ENCODE measurements at regions of chr14 and their contacts with region 1.

Region 1: DNA sequence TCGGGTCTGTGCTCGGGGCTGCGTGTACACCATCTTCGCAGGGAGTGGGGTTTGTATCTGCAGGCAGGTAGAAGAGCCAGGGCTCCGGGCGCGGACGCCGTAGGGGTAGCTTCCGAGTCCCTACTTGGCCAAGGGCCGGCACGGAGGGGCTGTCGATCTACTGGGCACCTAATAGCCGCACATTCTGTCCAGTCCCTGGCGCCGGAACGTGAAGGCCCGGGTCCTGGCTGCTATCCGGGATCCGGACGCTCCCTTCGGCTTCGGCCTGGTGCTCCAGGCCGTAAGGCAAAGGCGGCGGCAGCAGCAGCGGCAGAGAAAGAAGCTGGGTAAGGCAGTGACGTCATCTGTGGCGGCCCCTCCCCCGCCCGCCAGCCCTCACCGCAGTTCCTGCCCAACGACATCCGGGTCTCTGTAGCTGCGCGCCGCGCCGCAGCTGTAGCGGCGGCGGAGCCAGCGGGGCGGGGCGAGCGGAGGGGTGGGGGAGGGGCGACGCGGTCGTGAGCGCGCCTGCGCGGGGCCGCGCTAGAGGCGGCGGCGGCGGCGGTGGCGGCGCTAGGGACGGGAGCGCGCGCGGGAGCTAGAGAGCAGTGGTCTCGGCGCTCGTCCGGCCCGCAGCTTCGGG is at the start of gene PPM1A:
- DNase-seq: peak; percentile 96
- ATAC-seq: peak; percentile 76
- H3K4me3 Mint-ChIP-seq: peak within 1 kb of the TSS; percentile 90
- H3K27ac Mint-ChIP-seq: peak within 1 kb of the TSS; percentile 100
- H3K4me1 Mint-ChIP-seq: peaks cover 52% of the 10 kb centered on the region
- H3K27me3 Mint-ChIP-seq: no peaks in the 10 kb centered on the region
- CTCF ChIP-seq: no peak
- total RNA-seq, gene PPM1A: 40.0 to 40.5 TPM

Region 2: GRCh38 chr14:60091550-60092530 is 157.0 kb before region 1 on chr14 and contains the start of gene PCNX4:
- CTCF ChIA-PET with region 1: no interaction called
- POLR2A ChIA-PET with region 1: interaction called, 8 read pairs
- intact Hi-C with region 1: loop called (anchors 5 kb)
- DNase-seq: peak; percentile 97
- ATAC-seq: peak; percentile 93
- H3K4me3 Mint-ChIP-seq: peak within 1 kb of the TSS; percentile 100
- H3K27ac Mint-ChIP-seq: peak within 1 kb of the TSS; percentile 98
- H3K4me1 Mint-ChIP-seq: peaks cover 30% of the 10 kb centered on the region
- H3K27me3 Mint-ChIP-seq: no peaks in the 10 kb centered on the region
- CTCF ChIP-seq: no peak
- total RNA-seq, gene PCNX4: 28.2 to 30.0 TPM

Region 3: DNA sequence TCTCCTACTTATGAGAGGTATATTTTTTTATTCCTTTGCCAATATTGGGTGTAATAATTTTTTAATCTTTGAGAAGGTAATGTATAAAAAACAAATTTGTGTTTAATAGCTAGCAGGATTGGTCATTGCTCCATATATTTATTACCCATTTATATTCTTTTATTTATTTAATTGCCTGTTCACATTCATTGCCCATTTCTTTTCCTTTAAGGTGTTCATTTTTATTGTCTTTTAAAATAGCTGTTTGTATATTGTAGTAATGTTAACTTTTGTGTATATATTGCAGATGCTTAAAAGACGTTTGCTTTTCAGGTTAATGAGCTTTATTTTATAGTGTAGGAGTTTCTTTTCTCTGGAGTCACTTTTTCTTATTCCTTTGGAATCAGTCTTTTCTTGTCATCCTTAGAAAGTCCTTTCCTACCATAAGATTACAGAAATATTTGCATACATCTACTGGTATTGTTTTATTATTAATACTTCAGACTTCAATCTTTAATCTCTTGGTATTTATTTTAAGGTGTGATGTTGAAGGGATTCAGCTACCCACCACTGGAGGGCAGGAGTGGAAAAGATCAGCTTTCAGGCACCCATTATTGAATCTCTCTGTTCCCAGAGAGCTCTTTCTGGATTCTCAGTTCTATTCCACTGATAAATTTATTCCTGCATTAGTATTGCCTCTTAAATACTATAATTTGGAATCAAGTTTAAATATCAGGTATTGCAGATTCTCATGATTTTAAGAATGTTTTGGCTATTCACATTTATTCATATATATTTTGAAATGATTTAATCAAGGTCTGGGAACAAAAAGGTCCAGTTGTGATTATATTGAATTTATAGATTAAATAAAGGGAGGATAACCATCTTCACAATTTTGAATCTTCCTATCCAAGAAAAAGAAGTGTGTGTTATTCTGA is 17.5 kb after region 1 on chr14:
- CTCF ChIA-PET with region 1: interaction called, 65 read pairs
- POLR2A ChIA-PET with region 1: interaction called, 20 read pairs
- intact Hi-C with region 1: no loop called
- DNase-seq: peak; percentile 44
- ATAC-seq: peak; percentile 65
- H3K4me3 Mint-ChIP-seq: no peak overlapping the region
- H3K27ac Mint-ChIP-seq: no peak overlapping the region
- H3K4me1 Mint-ChIP-seq: peaks cover 14% of the 10 kb centered on the region
- H3K27me3 Mint-ChIP-seq: no peaks in the 10 kb centered on the region
- CTCF ChIP-seq: peak; percentile 71